Activated B cell treated with CpG ODN at 0.5 μM for 24 hours (primary cell): ENCODE measurements at regions of chr19 and their contacts with region 1.

Region 1: GRCh38 chr19:17755977-17756670 is 4.8 kb downstream of the FCHO1 start:
- DNase-seq: peak; percentile 61
- ATAC-seq: no peak
- H3K4me3 Mint-ChIP-seq: peak overlapping the region; percentile 46
- H3K27ac Mint-ChIP-seq: peak overlapping the region; percentile 90
- H3K4me1 Mint-ChIP-seq: peaks cover 84% of the 10 kb centered on the region
- H3K27me3 Mint-ChIP-seq: no peaks in the 10 kb centered on the region
- CTCF ChIP-seq: no peak

Region 2: GRCh38 chr19:17336872-17337722 is 419.0 kb before region 1 on chr19 and contains the start of gene GTPBP3:
- CTCF ChIA-PET with region 1: no interaction called
- POLR2A ChIA-PET with region 1: no interaction called
- intact Hi-C with region 1: loop called (anchors 10 kb)
- DNase-seq: peak; percentile 87
- ATAC-seq: peak; percentile 88
- H3K4me3 Mint-ChIP-seq: peak within 1 kb of the TSS; percentile 90
- H3K27ac Mint-ChIP-seq: peak within 1 kb of the TSS; percentile 89
- H3K4me1 Mint-ChIP-seq: peaks cover 36% of the 10 kb centered on the region
- H3K27me3 Mint-ChIP-seq: no peaks in the 10 kb centered on the region
- CTCF ChIP-seq: no peak
- total RNA-seq, gene GTPBP3: 32.4 and 40.2 TPM in 2 replicates

Region 3: DNA sequence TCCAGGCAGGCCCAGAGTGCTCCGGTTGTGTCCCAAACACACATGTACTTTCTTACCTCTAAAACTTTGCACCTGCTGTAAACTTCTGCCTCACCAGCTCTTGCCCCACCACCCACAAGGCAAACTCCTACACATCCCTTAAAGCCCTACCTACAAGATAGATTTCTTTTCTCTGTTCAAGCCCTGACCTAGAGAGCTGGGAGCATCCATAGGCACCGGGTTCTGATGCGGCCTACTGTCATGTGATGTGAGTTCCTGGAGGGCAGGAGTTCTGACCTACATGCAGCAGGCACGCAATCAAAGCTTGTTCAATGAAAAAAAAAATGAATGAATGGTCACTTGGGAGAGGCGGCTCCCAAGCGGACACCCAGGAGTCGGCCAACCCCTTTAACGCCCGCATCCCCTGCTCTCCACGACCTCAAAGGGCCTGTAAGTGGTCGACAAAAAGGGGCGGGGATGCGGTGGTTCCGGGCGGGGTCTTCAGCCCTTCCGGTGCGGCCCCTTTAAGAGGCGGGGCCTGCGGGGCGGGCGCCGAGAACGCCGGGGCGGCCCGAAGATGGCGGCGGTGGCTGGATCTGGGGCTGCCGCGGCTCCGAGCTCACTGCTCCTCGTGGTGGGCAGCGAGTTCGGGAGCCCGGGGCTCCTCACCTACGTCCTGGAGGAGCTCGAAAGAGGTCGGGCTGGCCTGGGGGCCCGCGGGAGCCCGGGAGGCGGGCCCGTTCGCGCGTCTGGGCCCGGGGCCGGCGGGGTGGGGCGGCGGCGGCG is 37.0 kb before region 1 on chr19 and contains the start of gene MAP1S:
- CTCF ChIA-PET with region 1: interaction called, 21 read pairs
- POLR2A ChIA-PET with region 1: interaction called, 29 read pairs
- intact Hi-C with region 1: loop called (anchors 1 kb)
- DNase-seq: peak; percentile 74
- ATAC-seq: peak; percentile 91
- H3K4me3 Mint-ChIP-seq: peak within 1 kb of the TSS; percentile 89
- H3K27ac Mint-ChIP-seq: peak within 1 kb of the TSS; percentile 77
- H3K4me1 Mint-ChIP-seq: peaks cover 38% of the 10 kb centered on the region
- H3K27me3 Mint-ChIP-seq: no peaks in the 10 kb centered on the region
- CTCF ChIP-seq: no peak
- total RNA-seq, gene MAP1S: 65.6 and 80.5 TPM in 2 replicates

Region 4: GRCh38 chr19:17739121-17739875 is 16.8 kb before region 1 on chr19:
- CTCF ChIA-PET with region 1: interaction called, 13 read pairs
- POLR2A ChIA-PET with region 1: interaction called, 108 read pairs
- intact Hi-C with region 1: loop called (anchors 1 kb)
- DNase-seq: peak; percentile 68
- ATAC-seq: peak; percentile 84
- H3K4me3 Mint-ChIP-seq: peak overlapping the region; percentile 75
- H3K27ac Mint-ChIP-seq: peak overlapping the region; percentile 83
- H3K4me1 Mint-ChIP-seq: peaks cover 43% of the 10 kb centered on the region
- H3K27me3 Mint-ChIP-seq: no peaks in the 10 kb centered on the region
- CTCF ChIP-seq: no peak

Region 5: DNA sequence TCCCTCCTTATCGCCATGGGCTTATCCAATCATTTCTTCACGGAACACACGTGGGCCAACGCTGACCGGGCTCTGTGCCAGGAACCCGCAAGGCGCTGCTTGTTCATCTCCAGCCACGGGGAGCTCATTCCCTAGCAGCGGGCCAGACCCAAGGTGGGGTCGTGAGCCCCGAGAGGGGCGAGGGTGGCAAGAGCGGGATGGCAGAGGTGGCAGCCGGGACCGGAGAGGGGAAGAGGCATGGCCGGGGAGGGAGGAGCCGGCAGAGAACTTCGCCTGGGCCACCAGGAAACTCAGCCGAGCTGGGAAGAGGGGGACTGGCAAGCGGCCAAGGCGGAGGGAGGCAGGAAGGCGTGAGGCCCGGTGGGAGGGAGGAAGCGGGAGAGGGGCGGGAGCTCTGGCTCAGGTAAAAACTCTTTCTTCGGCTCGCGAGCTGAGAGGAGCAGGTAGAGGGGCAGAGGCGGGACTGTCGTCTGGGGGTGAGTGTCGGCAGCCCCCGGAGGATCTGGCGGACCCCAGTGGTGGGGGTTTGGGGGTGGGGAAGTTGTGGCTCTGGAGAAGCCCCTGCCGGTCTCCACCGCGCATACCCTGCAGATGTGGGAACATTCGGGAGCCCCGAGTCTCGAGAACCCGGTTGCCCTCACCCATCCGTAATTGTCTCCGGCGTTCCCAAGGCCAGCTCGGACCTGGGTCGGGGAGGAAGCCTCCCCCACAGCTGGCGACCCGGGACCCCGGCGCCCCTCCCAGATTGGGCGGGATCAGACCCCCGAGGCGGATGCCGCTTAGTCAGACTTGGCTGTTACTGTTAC is 38.8 kb after region 1 on chr19 and contains the start of gene B3GNT3:
- CTCF ChIA-PET with region 1: no interaction called
- POLR2A ChIA-PET with region 1: no interaction called
- intact Hi-C with region 1: no loop called
- DNase-seq: no peak
- ATAC-seq: peak; percentile 21
- H3K4me3 Mint-ChIP-seq: peak within 1 kb of the TSS; percentile 38
- H3K27ac Mint-ChIP-seq: no peak within 1 kb of the TSS
- H3K4me1 Mint-ChIP-seq: peaks cover 40% of the 10 kb centered on the region
- H3K27me3 Mint-ChIP-seq: peaks cover 15% of the 10 kb centered on the region
- CTCF ChIP-seq: no peak
- total RNA-seq, gene B3GNT3: not detected in 2 replicates

Region 6: DNA sequence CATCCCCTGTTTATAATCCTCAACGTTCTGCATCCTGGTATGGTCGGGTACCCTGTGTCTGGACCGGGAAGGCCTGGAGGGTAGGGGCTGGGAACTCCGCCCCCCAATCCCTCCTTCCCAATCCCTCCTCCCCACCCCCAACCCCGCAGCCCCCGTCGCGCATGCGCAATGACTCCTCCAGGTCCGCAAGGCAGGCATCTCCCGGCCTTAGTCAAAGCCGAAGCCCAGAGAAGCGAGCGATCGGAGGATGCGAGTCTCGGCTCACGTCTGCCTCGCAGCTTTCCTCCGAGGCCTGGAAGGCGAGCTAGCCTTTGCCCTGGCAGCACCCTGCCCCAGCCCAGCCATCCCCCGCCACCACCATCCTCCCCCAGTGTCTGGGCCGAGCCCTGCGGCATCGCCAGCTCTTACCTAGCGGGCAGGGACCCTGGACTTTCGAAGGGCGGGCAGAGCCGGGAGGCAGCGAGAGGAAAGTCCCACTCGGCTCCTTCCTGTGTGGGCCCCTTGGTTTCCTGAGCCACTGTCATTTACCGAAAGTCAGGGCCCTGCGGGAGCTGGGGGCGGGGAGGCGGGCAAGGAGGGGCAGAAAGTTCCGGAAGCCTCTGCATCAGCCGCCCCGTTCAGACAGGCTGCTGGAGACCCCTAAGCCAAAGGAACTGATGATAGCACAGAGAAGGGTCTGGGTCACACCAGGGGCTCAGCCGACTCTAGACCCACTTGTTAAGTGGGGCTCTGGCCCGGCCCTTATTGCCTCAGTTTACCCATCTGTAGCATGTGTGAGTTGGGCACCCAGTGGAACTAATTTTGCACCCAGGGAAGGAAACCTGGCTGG is 91.6 kb after region 1 on chr19 and contains the start of gene JAK3:
- CTCF ChIA-PET with region 1: interaction called, 17 read pairs
- POLR2A ChIA-PET with region 1: interaction called, 76 read pairs
- intact Hi-C with region 1: no loop called
- DNase-seq: peak; percentile 79
- ATAC-seq: peak; percentile 86
- H3K4me3 Mint-ChIP-seq: peak within 1 kb of the TSS; percentile 94
- H3K27ac Mint-ChIP-seq: peak within 1 kb of the TSS; percentile 96
- H3K4me1 Mint-ChIP-seq: peaks cover 73% of the 10 kb centered on the region
- H3K27me3 Mint-ChIP-seq: no peaks in the 10 kb centered on the region
- CTCF ChIP-seq: no peak
- total RNA-seq, gene JAK3: 213 and 256 TPM in 2 replicates

Region 7: GRCh38 chr19:18007044-18007916 is 251.2 kb after region 1 on chr19:
- CTCF ChIA-PET with region 1: no interaction called
- POLR2A ChIA-PET with region 1: no interaction called
- intact Hi-C with region 1: loop called (anchors 10 kb)
- DNase-seq: peak; percentile 83
- ATAC-seq: peak; percentile 61
- H3K4me3 Mint-ChIP-seq: peak overlapping the region; percentile 93
- H3K27ac Mint-ChIP-seq: peak overlapping the region; percentile 92
- H3K4me1 Mint-ChIP-seq: peaks cover 40% of the 10 kb centered on the region
- H3K27me3 Mint-ChIP-seq: no peaks in the 10 kb centered on the region
- CTCF ChIP-seq: peak; percentile 84

Region 8: DNA sequence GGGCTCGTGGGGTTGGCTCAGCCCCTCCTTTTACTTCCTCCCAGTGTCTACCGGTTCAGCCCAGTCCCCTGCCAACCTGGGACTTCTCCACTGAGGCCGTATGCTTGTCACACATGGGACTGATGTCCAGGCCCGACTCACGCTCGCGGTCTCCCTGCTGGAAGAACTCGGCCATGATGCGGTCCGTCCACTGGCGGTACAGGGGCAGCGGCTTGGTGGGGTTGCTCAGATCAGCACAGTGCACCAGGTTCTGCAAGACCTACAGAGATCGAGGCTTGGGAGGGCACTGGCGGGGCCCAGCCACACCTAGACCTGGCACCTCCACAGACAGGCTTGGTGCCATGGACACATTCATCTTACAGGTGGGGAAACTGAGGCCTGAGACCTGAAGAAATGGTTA is 455.6 kb after region 1 on chr19:
- CTCF ChIA-PET with region 1: no interaction called
- POLR2A ChIA-PET with region 1: no interaction called
- intact Hi-C with region 1: no loop called
- DNase-seq: no peak
- ATAC-seq: no peak
- H3K4me3 Mint-ChIP-seq: no peak overlapping the region
- H3K27ac Mint-ChIP-seq: no peak overlapping the region
- H3K4me1 Mint-ChIP-seq: no peaks in the 10 kb centered on the region
- H3K27me3 Mint-ChIP-seq: peaks cover 14% of the 10 kb centered on the region
- CTCF ChIP-seq: no peak